Gastrocnemius medialis (tissue), 4 donors: ENCODE measurements at regions of chr12 and their contacts with region 1.

Region 1: GRCh38 chr12:26126340-26127284 is 1.8 kb upstream of the BHLHE41 start:
- DNase-seq: peak; percentile 89 to 92
- ATAC-seq: peak; percentile 51
- H3K4me3 ChIP-seq: peak overlapping the region; percentile 66 to 89 (median 72)
- H3K27ac ChIP-seq: peak overlapping the region; percentile 95 to 100 (median 97)
- H3K4me1 ChIP-seq: peaks cover 11 to 12% of the 10 kb centered on the region in 2 donors
- H3K27me3 ChIP-seq: no peaks in the 10 kb centered on the region
- CTCF ChIP-seq: no peak
- POLR2A ChIP-seq: peak; percentile 32 to 56

Region 2: DNA sequence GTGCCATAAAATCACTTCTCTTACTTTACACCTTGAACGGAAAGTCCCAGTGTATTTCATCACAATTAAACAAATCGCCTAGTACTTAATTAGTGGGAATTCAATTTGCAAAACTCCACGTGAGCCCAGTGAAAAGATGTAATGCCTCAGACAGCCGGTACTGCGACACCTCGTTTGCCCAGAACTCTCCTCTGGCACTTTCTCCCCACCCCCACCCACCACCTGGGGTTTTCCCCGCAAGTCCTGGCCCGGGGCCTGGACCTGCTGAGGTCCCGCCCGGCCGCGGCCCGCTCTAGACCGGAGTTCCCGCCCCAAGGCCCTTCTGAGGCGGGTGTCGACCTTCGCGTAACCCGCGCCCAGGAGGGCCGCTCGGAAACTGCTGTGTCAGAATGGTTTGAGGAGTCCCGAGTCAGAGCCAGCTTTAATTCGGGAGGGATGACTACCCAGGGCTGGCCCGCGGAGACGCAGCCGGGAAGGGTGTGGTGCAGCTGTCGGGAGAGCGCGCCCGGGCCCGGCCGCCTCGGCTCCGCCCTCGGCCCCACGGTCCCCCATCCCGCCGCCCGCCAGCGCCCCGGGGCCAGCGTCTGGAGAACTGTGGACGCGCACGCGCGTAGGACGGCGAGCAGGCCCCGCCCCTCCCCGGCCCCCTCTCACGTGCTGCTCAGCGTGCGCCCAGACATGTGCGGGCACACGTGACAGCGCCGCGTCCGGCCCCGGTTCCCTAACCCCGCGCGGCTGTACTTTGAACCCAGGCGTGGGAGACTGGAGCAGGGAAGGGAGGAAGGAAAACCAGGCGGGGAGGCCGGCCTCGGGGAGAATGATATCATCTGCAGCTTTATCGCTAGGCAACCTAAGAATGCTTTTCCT is 12.5 kb before region 1 on chr12:
- in situ Hi-C with region 1: no loop called
- intact Hi-C with region 1: loop called (anchors 1 kb)
- DNase-seq: peak; percentile 94 to 98
- ATAC-seq: peak; percentile 53 to 63
- H3K4me3 ChIP-seq: peak overlapping the region; percentile 46 to 61 (median 50)
- H3K27ac ChIP-seq: peak overlapping the region; percentile 95 to 100 (median 97)
- H3K4me1 ChIP-seq: peaks cover 80 to 84% of the 10 kb centered on the region in 2 donors
- H3K27me3 ChIP-seq: no peaks in the 10 kb centered on the region
- CTCF ChIP-seq: peak; percentile 11 to 53 (median 38)
- POLR2A ChIP-seq: peak; percentile 89 to 96

Region 3: GRCh38 chr12:26153421-26154154 is 27.0 kb after region 1 on chr12:
- in situ Hi-C with region 1: no loop called
- intact Hi-C with region 1: loop called (anchors 1 kb)
- DNase-seq: peak; percentile 21 to 24
- ATAC-seq: peak; percentile 84 to 96
- H3K4me3 ChIP-seq: no peak overlapping the region
- H3K27ac ChIP-seq: peak overlapping the region; percentile 53 to 71 (median 60)
- H3K4me1 ChIP-seq: peaks cover 8 to 9% of the 10 kb centered on the region in 2 donors
- H3K27me3 ChIP-seq: no peaks in the 10 kb centered on the region
- CTCF ChIP-seq: no peak
- POLR2A ChIP-seq: no peak

Region 4: GRCh38 chr12:26187014-26187798 is 60.6 kb after region 1 on chr12:
- in situ Hi-C with region 1: no loop called
- intact Hi-C with region 1: loop called (anchors 2 kb)
- DNase-seq: no peak
- ATAC-seq: no peak
- H3K4me3 ChIP-seq: no peak overlapping the region
- H3K27ac ChIP-seq: peak overlapping the region in 1 of 4 donors; percentile 57
- H3K4me1 ChIP-seq: peaks cover 13 to 14% of the 10 kb centered on the region in 2 donors
- H3K27me3 ChIP-seq: no peaks in the 10 kb centered on the region
- CTCF ChIP-seq: no peak
- POLR2A ChIP-seq: no peak

Region 5: GRCh38 chr12:26195641-26196420 is 69.2 kb after region 1 on chr12:
- in situ Hi-C with region 1: no loop called
- intact Hi-C with region 1: loop called (anchors 1 kb)
- DNase-seq: peak; percentile 39 to 69
- ATAC-seq: peak; percentile 74
- H3K4me3 ChIP-seq: peak overlapping the region; percentile 69 to 91 (median 76)
- H3K27ac ChIP-seq: peak overlapping the region; percentile 84 to 94 (median 92)
- H3K4me1 ChIP-seq: peaks cover 31 to 35% of the 10 kb centered on the region in 2 donors
- H3K27me3 ChIP-seq: no peaks in the 10 kb centered on the region
- CTCF ChIP-seq: no peak
- POLR2A ChIP-seq: peak; percentile 22 to 32

Region 6: GRCh38 chr12:26274441-26275312 is 148.1 kb after region 1 on chr12:
- in situ Hi-C with region 1: no loop called
- intact Hi-C with region 1: loop called (anchors 5 kb)
- DNase-seq: peak; percentile 57 to 76
- ATAC-seq: peak; percentile 85 to 87
- H3K4me3 ChIP-seq: no peak overlapping the region
- H3K27ac ChIP-seq: peak overlapping the region; percentile 61 to 70 (median 68)
- H3K4me1 ChIP-seq: peaks cover 21 to 27% of the 10 kb centered on the region in 2 donors
- H3K27me3 ChIP-seq: no peaks in the 10 kb centered on the region
- CTCF ChIP-seq: no peak
- POLR2A ChIP-seq: peak; percentile 1 to 9

Region 7: GRCh38 chr12:26298785-26299621 is 172.4 kb after region 1 on chr12:
- in situ Hi-C with region 1: no loop called
- intact Hi-C with region 1: loop called (anchors 5 kb)
- DNase-seq: peak in 1 of 2 donors; percentile 24
- ATAC-seq: peak; percentile 99
- H3K4me3 ChIP-seq: peak overlapping the region; percentile 4 to 40 (median 32)
- H3K27ac ChIP-seq: peak overlapping the region; percentile 49 to 79 (median 77)
- H3K4me1 ChIP-seq: peaks cover 7 to 9% of the 10 kb centered on the region in 2 donors
- H3K27me3 ChIP-seq: no peaks in the 10 kb centered on the region
- CTCF ChIP-seq: peak in 3 of 5 experiments; percentile 20 to 61 (median 33)
- POLR2A ChIP-seq: no peak